ENCODE measurements at regions of chr6 and their contacts with region 1.

Region 1: DNA sequence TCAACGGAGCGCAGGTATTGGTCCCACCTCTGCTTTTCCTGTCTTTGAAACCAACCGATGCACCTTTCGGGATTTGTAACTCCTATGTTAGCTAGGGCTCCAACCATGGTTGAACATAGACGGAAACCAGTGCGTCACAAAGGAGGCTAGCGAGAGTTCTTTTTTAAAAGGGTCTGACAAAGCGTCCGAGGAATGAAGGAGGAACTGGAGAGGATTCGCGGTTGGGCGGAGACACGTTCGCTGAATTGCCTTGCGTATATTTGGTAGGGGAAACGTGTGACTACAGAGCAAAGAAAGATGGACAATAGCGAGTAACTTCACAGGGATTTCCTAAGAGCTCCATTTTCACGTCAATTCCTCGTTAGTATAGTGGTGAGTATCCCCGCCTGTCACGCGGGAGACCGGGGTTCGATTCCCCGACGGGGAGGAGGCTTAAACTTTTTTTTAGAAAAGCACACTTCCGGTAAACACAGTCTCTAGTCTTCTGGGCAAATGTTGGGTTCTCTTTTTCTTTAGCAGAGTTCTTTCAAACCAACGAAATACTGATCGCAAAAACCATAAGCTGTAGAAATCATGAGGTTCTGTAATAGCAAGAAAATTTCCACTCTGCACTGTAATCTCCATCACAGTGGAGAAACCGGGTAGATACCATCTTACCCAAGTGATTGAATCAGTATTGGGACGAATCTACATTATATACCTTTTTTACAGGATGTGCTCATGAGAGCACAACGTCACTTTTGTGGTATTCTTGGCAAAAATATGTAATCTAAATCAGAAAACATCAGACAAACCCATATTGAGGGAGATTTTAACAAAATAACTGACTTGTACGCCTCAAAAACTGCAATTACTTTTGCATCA is 6.6 kb upstream of the ZNF184 start:
- DNase-seq: peak; percentile 90 to 95 (median 93)
- H3K4me3 ChIP-seq: peak overlapping the region; percentile 97 to 100 (median 100)
- H3K4me3 Mint-ChIP-seq: no peak overlapping the region
- H3K27ac ChIP-seq: peak overlapping the region; percentile 96 to 100
- H3K27ac Mint-ChIP-seq: no peak overlapping the region
- H3K4me1 ChIP-seq: peaks cover 15 to 23% of the 10 kb centered on the region in 2 donors
- H3K4me1 Mint-ChIP-seq: no peaks in the 10 kb centered on the region
- H3K27me3 ChIP-seq: no peaks in the 10 kb centered on the region
- H3K27me3 Mint-ChIP-seq: peaks cover 0 to 5% (median 3%) of the 10 kb centered on the region in 3 donors
- CTCF ChIP-seq: no peak

Region 2: DNA sequence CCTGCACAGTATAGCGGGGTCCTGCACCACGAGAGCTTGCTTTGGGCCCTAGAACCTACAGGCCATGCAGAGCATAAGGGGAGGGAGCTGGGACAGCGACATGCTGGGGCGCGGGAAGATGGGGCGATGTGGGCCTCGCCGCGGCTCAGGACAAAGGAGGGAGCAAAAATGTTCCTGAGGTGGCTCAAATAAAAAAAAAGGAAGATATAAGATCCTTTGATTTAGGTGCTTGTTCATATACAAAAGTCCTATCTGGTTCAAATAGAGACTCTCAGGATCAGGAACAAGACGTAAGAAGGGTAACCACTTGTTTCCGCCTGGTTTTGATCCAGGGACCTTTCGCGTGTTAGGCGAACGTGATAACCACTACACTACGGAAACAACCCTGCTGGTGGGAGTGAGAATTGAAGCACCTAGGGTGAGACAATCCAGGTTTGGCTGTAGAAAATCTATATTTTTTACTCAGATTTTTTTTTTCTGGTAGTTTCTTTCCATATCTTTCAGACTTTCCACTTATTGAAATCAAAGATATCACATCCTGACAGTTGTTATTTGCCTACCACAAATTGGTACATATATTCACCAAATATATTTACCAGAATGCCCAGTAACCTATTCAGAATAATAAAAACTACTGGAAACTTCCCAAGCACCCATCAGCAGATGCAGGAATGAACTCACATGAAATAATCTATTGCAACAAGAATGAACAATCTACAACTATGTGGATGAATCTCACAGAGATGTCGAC is 171.2 kb after region 1 on chr6:
- intact Hi-C with region 1: no loop called
- DNase-seq: no peak
- H3K4me3 ChIP-seq: no peak overlapping the region
- H3K4me3 Mint-ChIP-seq: peak overlapping the region in 1 of 2 donors; percentile 59
- H3K27ac ChIP-seq: no peak overlapping the region
- H3K27ac Mint-ChIP-seq: no peak overlapping the region
- H3K4me1 ChIP-seq: no peaks in the 10 kb centered on the region
- H3K4me1 Mint-ChIP-seq: no peaks in the 10 kb centered on the region
- H3K27me3 ChIP-seq: peaks cover 10 to 43% of the 10 kb centered on the region in 2 donors
- H3K27me3 Mint-ChIP-seq: peaks cover 36 to 70% (median 53%) of the 10 kb centered on the region in 3 donors
- CTCF ChIP-seq: no peak

Region 3: GRCh38 chr6:27687154-27688013 is 207.8 kb after region 1 on chr6:
- intact Hi-C with region 1: loop called in 1 of 2 experiments (anchors 5 kb)
- DNase-seq: peak; percentile 51 to 62 (median 57)
- H3K4me3 ChIP-seq: peak overlapping the region; percentile 31 to 80 (median 47)
- H3K4me3 Mint-ChIP-seq: peak overlapping the region; percentile 93 to 95
- H3K27ac ChIP-seq: no peak overlapping the region
- H3K27ac Mint-ChIP-seq: peak overlapping the region in 2 of 7 donors; percentile 20 to 42
- H3K4me1 ChIP-seq: peaks cover 13 to 15% of the 10 kb centered on the region in 2 donors
- H3K4me1 Mint-ChIP-seq: peaks cover 18% of the 10 kb centered on the region
- H3K27me3 ChIP-seq: peaks cover 8 to 64% of the 10 kb centered on the region in 2 donors
- H3K27me3 Mint-ChIP-seq: peaks cover 54 to 73% (median 58%) of the 10 kb centered on the region in 3 donors
- CTCF ChIP-seq: peak; percentile 72

Region 4: DNA sequence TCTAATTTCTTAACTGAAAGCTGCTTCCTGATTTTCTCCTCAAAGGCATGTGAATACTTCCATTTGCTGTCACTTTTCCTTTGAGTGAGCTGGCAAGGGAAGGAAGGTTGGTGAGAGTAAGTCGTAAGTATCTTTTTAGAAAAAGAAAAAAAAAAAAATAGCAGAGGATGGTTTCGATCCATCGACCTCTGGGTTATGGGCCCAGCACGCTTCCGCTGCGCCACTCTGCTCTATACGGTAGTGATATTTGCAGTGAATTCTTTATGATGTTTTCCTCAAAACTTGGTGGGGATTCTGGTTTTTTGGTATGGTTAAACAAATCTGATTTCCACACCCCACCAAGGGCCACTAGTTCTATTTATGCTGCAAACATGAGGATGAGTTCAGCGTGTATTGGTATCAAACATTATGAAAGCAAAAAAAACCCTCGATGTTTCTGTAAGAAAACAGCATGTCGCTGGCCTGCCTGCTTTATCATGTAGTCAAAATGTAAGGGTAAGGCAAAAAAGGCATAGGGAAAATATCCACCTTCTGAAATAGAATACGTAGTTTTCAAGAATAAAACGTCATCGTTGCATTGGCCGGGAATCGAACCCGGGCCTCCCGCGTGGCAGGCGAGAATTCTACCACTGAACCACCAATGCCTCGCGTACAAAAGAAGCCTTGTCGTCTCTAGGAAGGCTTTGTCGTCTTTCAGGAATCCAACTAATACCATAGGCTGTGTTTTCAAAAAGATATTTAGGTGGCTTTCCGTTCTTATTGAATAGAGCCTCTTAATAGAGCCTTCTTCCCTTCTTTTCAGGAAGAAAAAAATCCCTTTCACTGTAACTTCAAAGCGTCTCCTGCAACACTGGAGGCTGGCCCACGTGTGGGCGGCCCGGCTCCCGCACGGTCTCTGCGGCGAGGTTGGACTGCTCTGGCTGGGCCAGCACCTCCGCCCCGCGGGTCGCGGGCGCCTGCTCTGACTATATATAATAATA is 423.1 kb after region 1 on chr6:
- intact Hi-C with region 1: loop called in 1 of 2 experiments (anchors 5 kb)
- DNase-seq: peak; percentile 82 to 92 (median 85)
- H3K4me3 ChIP-seq: peak overlapping the region; percentile 48 to 97 (median 79)
- H3K4me3 Mint-ChIP-seq: peak overlapping the region; percentile 89 to 91
- H3K27ac ChIP-seq: peak overlapping the region; percentile 34 to 69
- H3K27ac Mint-ChIP-seq: peak overlapping the region; percentile 58 to 95 (median 87)
- H3K4me1 ChIP-seq: peaks cover 7 to 8% of the 10 kb centered on the region in 2 donors
- H3K4me1 Mint-ChIP-seq: peaks cover 7% of the 10 kb centered on the region
- H3K27me3 ChIP-seq: no peaks in the 10 kb centered on the region
- H3K27me3 Mint-ChIP-seq: peaks cover 2 to 4% (median 2%) of the 10 kb centered on the region in 3 donors
- CTCF ChIP-seq: no peak